WTC11 (cell line): ENCODE measurements at regions of chr14 and their contacts with region 1.

Region 1: GRCh38 chr14:38867561-38868150 is 235.4 kb downstream of the SEC23A start:
- DNase-seq: peak; percentile 79
- ATAC-seq: peak; percentile 96
- H3K4me3 Mint-ChIP-seq: no peak overlapping the region
- H3K27ac Mint-ChIP-seq: no peak overlapping the region
- H3K4me1 Mint-ChIP-seq: peaks cover 19% of the 10 kb centered on the region
- H3K27me3 Mint-ChIP-seq: peaks cover 2% of the 10 kb centered on the region; the same call in 1 of the 2 replicates
- CTCF ChIP-seq: peak; percentile 78

Region 2: GRCh38 chr14:38721822-38722431 is 145.7 kb before region 1 on chr14:
- CTCF ChIA-PET with region 1: interaction called, 83 read pairs
- POLR2A ChIA-PET with region 1: no interaction called
- DNase-seq: peak; percentile 79
- ATAC-seq: peak; percentile 96
- H3K4me3 Mint-ChIP-seq: no peak overlapping the region
- H3K27ac Mint-ChIP-seq: no peak overlapping the region
- H3K4me1 Mint-ChIP-seq: peaks cover 6% of the 10 kb centered on the region
- H3K27me3 Mint-ChIP-seq: no peaks in the 10 kb centered on the region
- CTCF ChIP-seq: peak; percentile 82